AG04449 (cell line): ENCODE measurements at regions of chr14 and their contacts with region 1.

Region 1: DNA sequence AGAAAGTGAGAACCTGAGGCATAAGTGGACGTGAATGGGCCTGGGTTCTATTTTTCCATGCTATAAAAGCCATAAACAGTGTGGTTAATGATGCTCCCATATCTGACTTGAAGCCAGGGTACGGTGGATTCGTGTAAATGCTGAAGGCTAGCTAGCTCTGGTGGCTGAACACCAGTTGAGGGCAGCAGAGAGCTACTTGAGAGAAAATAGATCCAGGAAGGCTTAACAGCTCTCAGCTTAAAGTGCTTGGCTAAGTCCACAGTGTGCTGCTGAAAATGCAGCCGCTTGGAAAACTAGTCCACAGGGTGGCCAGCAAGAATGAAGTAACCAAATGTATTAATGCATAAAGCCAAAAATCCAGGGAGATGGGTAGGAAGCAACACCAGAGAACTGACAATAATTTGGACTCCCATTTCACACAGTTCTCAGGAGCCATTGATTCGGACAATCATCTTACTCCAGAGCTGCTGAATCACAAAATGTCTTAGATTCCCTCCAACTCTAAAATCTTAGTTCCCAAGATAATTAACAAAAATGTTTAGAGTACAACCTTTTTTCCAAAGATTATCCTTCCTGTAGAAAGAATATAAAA is 15.0 kb upstream of the FOXG1 start:
- DNase-seq: no peak
- H3K4me3 ChIP-seq: no peak overlapping the region
- CTCF ChIP-seq: peak; percentile 74

Region 2: GRCh38 chr14:28773861-28774691 is 22.5 kb after region 1 on chr14:
- CTCF ChIA-PET with region 1: interaction called, 11 read pairs
- POLR2A ChIA-PET with region 1: no interaction called
- DNase-seq: no peak
- H3K4me3 ChIP-seq: no peak overlapping the region
- CTCF ChIP-seq: peak; percentile 46

Region 3: GRCh38 chr14:28867571-28867970 is 116.0 kb after region 1 on chr14:
- CTCF ChIA-PET with region 1: no interaction called
- POLR2A ChIA-PET with region 1: no interaction called
- DNase-seq: no peak
- H3K4me3 ChIP-seq: no peak overlapping the region
- CTCF ChIP-seq: no peak

Region 4: GRCh38 chr14:29529418-29529817 is 777.9 kb after region 1 on chr14:
- CTCF ChIA-PET with region 1: interaction called, 93 read pairs
- POLR2A ChIA-PET with region 1: no interaction called
- DNase-seq: no peak
- H3K4me3 ChIP-seq: no peak overlapping the region
- CTCF ChIP-seq: peak; percentile 14

Region 5: GRCh38 chr14:30214461-30215090 is 1463.0 kb after region 1 on chr14:
- CTCF ChIA-PET with region 1: interaction called, 57 read pairs
- POLR2A ChIA-PET with region 1: no interaction called
- DNase-seq: no peak
- H3K4me3 ChIP-seq: no peak overlapping the region
- CTCF ChIP-seq: peak; percentile 49

Region 6: DNA sequence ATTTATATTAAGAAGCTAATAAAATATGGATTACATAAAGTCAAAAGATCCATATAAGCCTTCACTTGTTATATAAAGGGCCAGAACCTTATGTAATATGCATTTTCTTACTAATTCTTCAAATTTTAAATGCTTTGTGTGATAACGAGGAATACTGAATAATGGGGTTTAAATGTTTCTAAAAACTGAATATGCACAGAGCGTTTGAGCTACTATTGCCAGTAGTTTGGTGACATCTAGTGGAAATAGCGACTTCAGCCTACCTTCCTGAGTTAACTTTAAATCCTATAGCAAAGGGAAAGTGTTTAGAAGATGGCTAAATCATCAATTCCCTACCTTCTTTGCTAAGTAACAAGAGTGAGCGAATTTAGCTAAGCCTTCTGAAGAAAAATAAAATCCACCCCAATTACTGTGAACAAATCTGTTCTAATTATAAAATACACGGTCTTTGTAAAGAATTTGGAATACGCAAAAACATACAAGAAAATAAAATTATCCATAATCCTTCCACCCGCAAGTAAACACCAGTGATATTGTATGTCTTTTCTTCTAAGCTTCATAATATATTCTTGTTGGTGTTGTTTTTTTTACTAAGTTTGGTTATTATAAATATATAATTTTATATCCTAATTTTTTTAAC is 1691.9 kb after region 1 on chr14:
- CTCF ChIA-PET with region 1: interaction called, 21 read pairs
- POLR2A ChIA-PET with region 1: no interaction called
- DNase-seq: no peak
- H3K4me3 ChIP-seq: no peak overlapping the region
- CTCF ChIP-seq: peak; percentile 4